Activated T-helper 2 cell treated with anti-CD3 and anti-CD28 coated beads, Interferon-gamma antibody, Interleukin-2, Interleukin-4, amounts not matched to agents 10 μg/mL and 5 μg/mL and 100 μg/mL, durations not matched to agents 14 hours and 24 hours and 36 hours (primary cell): ENCODE measurements at regions of chr10 and their contacts with region 1.

Region 1: GRCh38 chr10:122374237-122374869 is at the start of gene PLEKHA1:
- DNase-seq: peak; percentile 88
- H3K4me3 Mint-ChIP-seq: peak within 1 kb of the TSS; percentile 87
- H3K27ac Mint-ChIP-seq: peak within 1 kb of the TSS; percentile 91
- H3K4me1 Mint-ChIP-seq: peaks cover 27% of the 10 kb centered on the region
- H3K27me3 Mint-ChIP-seq: peaks cover 57% of the 10 kb centered on the region
- total RNA-seq, gene PLEKHA1: 4.5 and 5.1 TPM in 2 replicates

Region 2: GRCh38 chr10:121927841-121928527 is 446.4 kb before region 1 on chr10 and contains the start of gene ATE1:
- intact Hi-C with region 1: loop called (anchors 10 kb)
- DNase-seq: peak; percentile 77
- H3K4me3 Mint-ChIP-seq: peak within 1 kb of the TSS; percentile 94
- H3K27ac Mint-ChIP-seq: peak within 1 kb of the TSS; percentile 98
- H3K4me1 Mint-ChIP-seq: peaks cover 18% of the 10 kb centered on the region
- H3K27me3 Mint-ChIP-seq: no peaks in the 10 kb centered on the region
- total RNA-seq, gene ATE1: 33.6 and 34.9 TPM in 2 replicates

Region 3: GRCh38 chr10:122298598-122299301 is 75.6 kb before region 1 on chr10:
- intact Hi-C with region 1: loop called (anchors 2 kb)
- DNase-seq: peak; percentile 34
- H3K4me3 Mint-ChIP-seq: no peak overlapping the region
- H3K27ac Mint-ChIP-seq: no peak overlapping the region
- H3K4me1 Mint-ChIP-seq: peaks cover 10% of the 10 kb centered on the region
- H3K27me3 Mint-ChIP-seq: peaks cover 6% of the 10 kb centered on the region

Region 4: DNA sequence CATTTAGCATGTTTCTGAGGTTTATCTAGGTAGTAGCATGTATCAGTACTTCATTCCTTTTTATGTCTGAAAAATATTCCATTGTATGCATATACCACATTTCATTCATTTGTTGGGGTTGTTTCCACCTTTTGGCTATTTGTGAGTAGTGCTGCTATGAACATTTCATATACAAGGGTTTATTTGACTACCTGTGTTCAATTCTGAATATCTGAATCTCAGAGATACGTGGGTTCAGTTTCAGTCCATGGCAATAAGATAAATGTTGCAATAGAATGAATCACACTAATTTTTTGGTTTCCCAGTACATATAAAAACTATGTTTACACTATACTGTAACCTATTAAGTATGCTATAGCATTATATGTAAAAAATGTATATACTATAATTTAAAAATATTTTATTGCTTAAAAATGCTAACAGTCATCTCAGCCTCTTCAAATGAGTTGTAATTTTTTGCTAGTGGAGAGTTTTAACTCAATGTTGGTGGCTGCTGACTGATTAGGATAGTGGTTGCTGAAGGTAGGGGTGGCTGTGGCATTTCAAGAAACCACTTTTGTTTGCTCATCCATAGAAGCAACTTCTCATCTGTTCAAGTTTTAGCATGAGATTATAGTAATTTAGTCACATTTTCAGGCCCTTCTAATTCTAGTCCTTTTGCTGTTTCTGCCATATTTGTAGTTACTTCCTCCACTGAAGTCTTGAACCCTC is 14.1 kb after region 1 on chr10:
- intact Hi-C with region 1: loop called (anchors 1 kb)
- DNase-seq: no peak
- H3K4me3 Mint-ChIP-seq: no peak overlapping the region
- H3K27ac Mint-ChIP-seq: peak overlapping the region; percentile 54
- H3K4me1 Mint-ChIP-seq: peaks cover 11% of the 10 kb centered on the region
- H3K27me3 Mint-ChIP-seq: peaks cover 40% of the 10 kb centered on the region

Region 5: GRCh38 chr10:122417667-122418066 is 43.3 kb after region 1 on chr10:
- intact Hi-C with region 1: loop called (anchors 2 kb)
- DNase-seq: no peak
- H3K4me3 Mint-ChIP-seq: no peak overlapping the region
- H3K27ac Mint-ChIP-seq: no peak overlapping the region
- H3K4me1 Mint-ChIP-seq: peaks cover 42% of the 10 kb centered on the region
- H3K27me3 Mint-ChIP-seq: peaks cover 2% of the 10 kb centered on the region

Region 6: DNA sequence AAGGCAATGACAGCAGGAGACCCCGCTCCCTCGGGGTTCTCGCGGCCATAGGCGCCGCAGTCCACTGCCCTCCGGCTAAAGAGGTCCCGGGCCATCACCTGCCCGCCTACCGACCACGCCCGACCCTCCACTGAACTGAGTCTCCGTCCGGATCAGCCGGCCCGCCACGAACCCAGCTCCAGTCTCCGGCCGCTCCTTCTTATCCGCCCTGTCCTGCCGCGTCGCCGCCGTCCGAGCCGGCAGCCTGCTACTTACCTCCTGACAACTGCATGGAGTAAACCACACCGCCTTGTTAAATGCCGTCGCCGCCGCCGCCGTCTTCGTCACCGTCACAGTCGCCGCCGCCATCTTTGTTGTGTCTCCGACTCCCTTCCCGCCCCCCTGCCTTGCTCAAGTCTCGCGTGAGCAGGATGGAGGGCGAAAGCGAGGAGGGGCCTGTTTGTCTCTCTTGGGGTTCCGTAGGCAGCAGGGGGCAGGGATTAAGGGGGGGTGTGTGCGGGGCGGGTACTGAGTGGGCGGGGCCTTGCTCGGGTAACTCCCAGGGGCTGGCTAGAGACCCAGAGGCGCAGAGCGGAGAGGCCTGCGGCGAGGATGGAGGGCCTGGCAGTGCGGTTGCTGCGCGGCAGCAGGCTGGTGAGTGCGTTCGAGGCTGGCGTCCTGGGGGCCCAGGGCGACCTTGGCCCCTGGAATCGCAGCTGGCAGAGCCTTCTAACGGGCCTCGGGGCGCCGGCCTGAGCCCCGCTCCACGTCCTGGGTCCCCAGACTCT is 634.3 kb after region 1 on chr10 and contains the starts of genes ACADSB and IKZF5:
- intact Hi-C with region 1: loop called (anchors 10 kb)
- DNase-seq: peak; percentile 94
- H3K4me3 Mint-ChIP-seq: peak within 1 kb of the TSS; percentile 98
- H3K27ac Mint-ChIP-seq: peak within 1 kb of the TSS; percentile 99
- H3K4me1 Mint-ChIP-seq: peaks cover 35% of the 10 kb centered on the region
- H3K27me3 Mint-ChIP-seq: no peaks in the 10 kb centered on the region
- total RNA-seq, gene ACADSB: 21.4 and 23.3 TPM in 2 replicates
- total RNA-seq, gene IKZF5: 15.0 and 16.1 TPM in 2 replicates